Heart right ventricle (tissue), 16 donors: ENCODE measurements at regions of chr10 and their contacts with region 1.

Region 1: GRCh38 chr10:4241724-4242345 is 456.8 kb upstream of the KLF6 start:
- DNase-seq: peak in 1 of 2 donors; percentile 87
- ATAC-seq: peak; percentile 82 to 92 (median 90)
- H3K4me3 ChIP-seq: peak overlapping the region in 9 of 10 donors; percentile 10 to 56 (median 45)
- H3K27ac ChIP-seq: peak overlapping the region; percentile 72 to 96 (median 89)
- H3K4me1 ChIP-seq: peaks cover 0 to 62% (median 46%) of the 10 kb centered on the region in 9 donors
- H3K27me3 ChIP-seq: no peaks in the 10 kb centered on the region
- CTCF ChIP-seq: no peak

Region 2: DNA sequence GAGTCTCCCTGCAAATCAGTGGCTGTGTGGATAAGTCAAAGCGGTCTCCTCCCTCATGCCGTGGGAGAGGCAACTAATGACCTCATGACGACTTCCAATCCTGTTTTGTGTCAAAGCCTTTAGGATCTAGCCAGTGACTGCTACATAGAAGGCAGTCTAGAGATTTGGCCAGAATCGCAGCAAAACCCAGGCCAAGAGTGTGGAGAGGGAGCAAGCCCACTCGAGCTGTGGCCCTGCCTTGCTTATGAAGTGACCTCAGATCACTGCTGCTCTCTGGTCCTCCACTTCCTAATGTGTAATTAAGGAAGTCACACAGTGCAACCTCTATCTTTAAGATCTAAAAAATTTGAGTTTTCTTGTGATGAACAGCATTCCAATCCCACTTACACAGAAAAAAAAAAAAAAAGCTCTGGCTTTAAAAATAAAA is 160.1 kb before region 1 on chr10:
- intact Hi-C with region 1: loop called in 2 of 10 experiments (anchors 5 to 10 kb)
- DNase-seq: peak in 1 of 2 donors; percentile 43
- ATAC-seq: peak in 7 of 8 donors; percentile 29 to 75 (median 64)
- H3K4me3 ChIP-seq: no peak overlapping the region
- H3K27ac ChIP-seq: peak overlapping the region in 8 of 10 donors; percentile 47 to 87 (median 64)
- H3K4me1 ChIP-seq: peaks cover 4 to 62% (median 51%) of the 10 kb centered on the region in 9 donors
- H3K27me3 ChIP-seq: no peaks in the 10 kb centered on the region
- CTCF ChIP-seq: no peak

Region 3: DNA sequence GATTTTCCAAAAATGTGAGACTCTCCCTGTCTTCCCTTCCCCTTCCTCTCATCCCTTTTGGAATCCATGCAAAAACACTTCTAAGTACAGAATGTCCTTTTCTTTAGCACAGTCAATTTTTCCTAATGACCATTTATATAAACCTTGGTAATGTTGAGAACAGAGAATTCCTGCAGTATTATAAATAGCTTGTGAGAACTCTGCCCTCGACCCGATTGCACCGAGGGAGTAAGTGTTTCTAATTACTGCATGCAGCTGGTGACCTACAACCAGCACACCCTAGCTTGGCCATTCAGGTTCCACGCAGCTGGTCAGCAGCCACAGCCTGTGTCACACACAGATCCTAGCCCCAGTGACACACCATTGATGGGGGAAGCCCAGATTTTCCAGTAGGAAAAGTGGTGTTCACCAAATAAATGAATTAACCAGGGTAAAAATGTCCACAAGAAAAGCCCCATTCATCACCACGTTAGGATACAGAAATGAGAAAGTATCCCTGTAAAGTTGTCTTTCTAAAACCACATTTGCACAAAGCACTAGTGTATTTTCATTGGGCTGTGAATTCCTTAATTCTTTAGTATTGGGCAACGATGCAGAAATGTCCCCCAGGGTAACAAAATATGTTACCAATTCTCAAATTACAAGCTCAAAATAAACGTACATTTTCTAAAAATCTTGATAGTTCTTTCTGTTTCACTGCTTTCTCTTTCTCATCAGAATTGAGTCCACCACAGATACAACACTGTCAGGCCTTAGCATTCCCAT is 42.2 kb after region 1 on chr10:
- intact Hi-C with region 1: loop called in 1 of 10 experiments (anchors 2 kb)
- DNase-seq: peak; percentile 55 to 80
- ATAC-seq: peak; percentile 88 to 95 (median 93)
- H3K4me3 ChIP-seq: no peak overlapping the region
- H3K27ac ChIP-seq: peak overlapping the region; percentile 50 to 78 (median 68)
- H3K4me1 ChIP-seq: peaks cover 3 to 61% (median 39%) of the 10 kb centered on the region in 9 donors
- H3K27me3 ChIP-seq: no peaks in the 10 kb centered on the region
- CTCF ChIP-seq: no peak

Region 4: DNA sequence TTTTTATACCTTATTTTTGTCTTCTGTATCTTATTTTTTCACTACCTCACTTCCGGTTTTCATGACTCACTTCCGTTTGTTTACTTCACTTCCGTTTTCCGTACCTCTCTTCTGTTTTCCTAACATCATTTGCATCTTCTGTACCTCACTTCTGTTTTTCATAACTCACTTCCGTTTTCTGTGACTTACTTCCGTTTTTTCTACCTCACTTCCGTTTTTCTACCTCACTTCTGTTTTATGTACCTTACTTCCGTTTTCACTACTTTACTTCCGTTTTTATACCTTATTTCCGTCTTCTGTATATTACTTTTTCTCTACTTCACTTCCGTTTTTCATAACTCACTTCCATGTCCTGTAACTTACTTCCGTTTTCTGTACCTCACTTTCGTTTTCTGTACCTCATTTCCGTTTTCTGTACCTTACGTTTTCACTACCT is 91.6 kb after region 1 on chr10:
- intact Hi-C with region 1: no loop called
- DNase-seq: no peak
- ATAC-seq: no peak
- H3K4me3 ChIP-seq: no peak overlapping the region
- H3K27ac ChIP-seq: peak overlapping the region in 1 of 10 donors; percentile 0
- H3K4me1 ChIP-seq: peaks cover 0 to 12% (median 4%) of the 10 kb centered on the region in 9 donors
- H3K27me3 ChIP-seq: no peaks in the 10 kb centered on the region
- CTCF ChIP-seq: no peak

Region 5: GRCh38 chr10:4372601-4373000 is 130.8 kb after region 1 on chr10:
- intact Hi-C with region 1: loop called in 1 of 10 experiments (anchors 10 kb)
- DNase-seq: peak in 1 of 2 donors; percentile 39
- ATAC-seq: peak; percentile 71 to 97 (median 96)
- H3K4me3 ChIP-seq: no peak overlapping the region
- H3K27ac ChIP-seq: peak overlapping the region in 9 of 10 donors; percentile 42 to 72 (median 60)
- H3K4me1 ChIP-seq: peaks cover 0 to 27% (median 11%) of the 10 kb centered on the region in 9 donors
- H3K27me3 ChIP-seq: no peaks in the 10 kb centered on the region
- CTCF ChIP-seq: no peak

Region 6: GRCh38 chr10:4649886-4650508 is 408.2 kb after region 1 on chr10:
- intact Hi-C with region 1: loop called in 3 of 10 experiments (anchors 5 to 10 kb)
- DNase-seq: no peak
- ATAC-seq: peak in 6 of 8 donors; percentile 53 to 85 (median 72)
- H3K4me3 ChIP-seq: no peak overlapping the region
- H3K27ac ChIP-seq: peak overlapping the region; percentile 1 to 81 (median 56)
- H3K4me1 ChIP-seq: peaks cover 0 to 51% (median 42%) of the 10 kb centered on the region in 9 donors
- H3K27me3 ChIP-seq: no peaks in the 10 kb centered on the region
- CTCF ChIP-seq: no peak

Region 7: DNA sequence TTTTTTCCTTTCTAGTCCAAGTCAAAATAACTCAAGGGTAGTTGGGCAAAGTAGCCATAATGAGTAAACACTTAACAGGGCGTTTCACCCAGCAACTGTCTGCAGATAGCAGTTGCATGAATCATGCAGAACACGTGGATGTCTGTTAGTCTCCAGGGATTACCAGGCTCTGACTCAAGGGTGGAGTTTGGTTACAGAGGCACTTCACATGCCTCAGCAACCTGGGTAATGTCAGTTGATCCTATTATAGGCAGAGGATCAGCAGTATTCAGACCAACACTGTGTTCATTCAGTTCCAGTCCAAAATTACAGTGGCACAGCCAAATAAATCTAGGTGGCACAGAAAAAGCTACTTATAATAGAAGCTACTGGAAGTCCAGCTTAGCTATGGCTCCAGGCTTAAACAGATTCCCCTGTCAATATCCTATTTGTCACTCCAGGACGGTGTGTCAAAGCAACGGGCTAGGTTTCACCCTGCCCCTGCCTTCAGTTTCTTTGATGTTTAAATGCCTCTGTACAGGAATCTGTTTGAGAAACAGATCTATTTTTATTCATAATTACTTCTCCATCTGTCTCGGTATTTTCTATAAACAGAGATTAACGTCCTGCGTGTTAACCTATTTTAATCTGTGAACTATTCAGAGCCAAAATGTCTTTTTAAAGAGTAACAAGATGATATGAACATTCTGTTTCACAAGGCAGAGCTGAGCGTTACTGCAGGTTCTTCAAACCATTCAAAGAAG is 421.5 kb after region 1 on chr10:
- intact Hi-C with region 1: loop called in 4 of 10 experiments (anchors 5 to 10 kb)
- DNase-seq: peak in 1 of 2 donors; percentile 88
- ATAC-seq: peak; percentile 84 to 95 (median 94)
- H3K4me3 ChIP-seq: peak overlapping the region in 5 of 10 donors; percentile 4 to 22 (median 13)
- H3K27ac ChIP-seq: peak overlapping the region; percentile 87 to 96 (median 92)
- H3K4me1 ChIP-seq: peaks cover 0 to 52% (median 36%) of the 10 kb centered on the region in 9 donors
- H3K27me3 ChIP-seq: no peaks in the 10 kb centered on the region
- CTCF ChIP-seq: no peak